BJ (cell line): ENCODE measurements at regions of chr17 and their contacts with region 1.

Region 1: GRCh38 chr17:12545877-12546513 is 119.7 kb upstream of the MYOCD start:
- DNase-seq: no peak
- H3K4me3 ChIP-seq: no peak overlapping the region
- H3K27me3 ChIP-seq: no peaks in the 10 kb centered on the region
- CTCF ChIP-seq: peak; percentile 85

Region 2: GRCh38 chr17:12256380-12256995 is 289.5 kb before region 1 on chr17:
- CTCF ChIA-PET with region 1: interaction called, 13 read pairs
- POLR2A ChIA-PET with region 1: no interaction called
- DNase-seq: peak; percentile 10
- H3K4me3 ChIP-seq: no peak overlapping the region
- H3K27me3 ChIP-seq: no peaks in the 10 kb centered on the region; the same call in 1 of the 2 replicates
- CTCF ChIP-seq: peak; percentile 69

Region 3: DNA sequence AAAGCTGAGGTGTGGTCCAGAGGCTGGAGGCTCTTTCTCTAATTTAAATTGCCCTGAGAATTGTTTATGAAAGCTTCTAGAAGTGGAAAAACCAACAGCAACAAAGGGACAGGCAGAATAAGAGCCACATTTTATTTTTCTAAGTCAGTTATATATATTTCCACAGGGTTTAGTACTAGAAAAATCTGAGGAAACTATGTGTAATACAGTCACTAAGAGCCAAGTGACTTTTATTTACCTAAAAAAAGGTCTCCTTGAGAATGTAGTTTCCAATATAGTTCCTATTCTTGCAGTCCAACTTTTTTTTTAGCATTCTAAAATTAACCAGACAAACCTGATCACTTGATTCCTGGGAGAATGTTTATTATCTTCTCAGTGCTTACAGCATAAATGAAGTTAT is 176.9 kb before region 1 on chr17:
- CTCF ChIA-PET with region 1: no interaction called
- POLR2A ChIA-PET with region 1: no interaction called
- DNase-seq: no peak
- H3K4me3 ChIP-seq: no peak overlapping the region
- H3K27me3 ChIP-seq: no peaks in the 10 kb centered on the region; the same call in 1 of the 2 replicates
- CTCF ChIP-seq: no peak

Region 4: DNA sequence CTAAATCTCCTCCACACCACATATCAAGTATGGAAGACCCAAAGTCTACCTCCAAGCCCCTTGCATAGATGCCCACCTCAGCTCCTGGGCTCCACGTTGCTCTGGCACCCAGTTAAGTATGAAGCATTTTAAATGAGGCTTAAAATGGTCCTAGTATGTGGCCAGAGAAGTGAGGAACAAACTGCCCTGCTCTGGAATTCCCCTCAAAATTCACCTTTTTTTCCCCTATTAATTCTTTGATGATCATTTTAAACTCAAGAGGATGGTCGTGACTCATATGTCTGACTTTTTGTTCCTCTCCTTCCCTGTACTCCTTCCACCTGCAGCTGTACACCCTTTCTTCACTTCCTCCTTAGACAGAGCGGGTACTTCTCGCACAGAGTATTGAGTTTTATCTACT is 114.8 kb before region 1 on chr17:
- CTCF ChIA-PET with region 1: no interaction called
- POLR2A ChIA-PET with region 1: no interaction called
- DNase-seq: no peak
- H3K4me3 ChIP-seq: no peak overlapping the region
- H3K27me3 ChIP-seq: no peaks in the 10 kb centered on the region; the same call in 1 of the 2 replicates
- CTCF ChIP-seq: no peak

Region 5: GRCh38 chr17:12485361-12485906 is 60.6 kb before region 1 on chr17:
- CTCF ChIA-PET with region 1: no interaction called
- POLR2A ChIA-PET with region 1: no interaction called
- DNase-seq: no peak
- H3K4me3 ChIP-seq: no peak overlapping the region
- H3K27me3 ChIP-seq: no peaks in the 10 kb centered on the region
- CTCF ChIP-seq: no peak

Region 6: DNA sequence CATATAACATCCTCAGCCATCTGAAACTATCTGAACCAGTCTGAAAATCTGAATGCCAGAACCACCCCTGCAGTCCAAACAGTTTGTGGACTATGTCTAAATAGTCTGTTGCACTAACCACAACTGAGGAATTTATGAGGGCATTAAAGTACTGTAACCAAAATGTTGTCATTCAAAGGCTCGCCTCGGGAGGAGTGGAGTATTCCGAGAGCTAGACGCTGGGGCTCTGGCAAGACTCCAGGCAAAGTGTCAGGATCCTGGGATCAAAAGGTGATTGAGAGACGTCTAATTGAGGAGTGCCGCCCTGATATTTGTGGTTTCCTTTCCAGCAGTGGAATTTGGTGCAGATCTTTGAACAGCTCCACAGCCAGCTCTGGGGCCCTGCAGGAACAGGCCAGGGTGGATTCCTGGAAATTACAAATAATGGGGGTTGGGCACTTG is 23.2 kb before region 1 on chr17:
- CTCF ChIA-PET with region 1: interaction called, 23 read pairs
- POLR2A ChIA-PET with region 1: no interaction called
- DNase-seq: peak; percentile 62
- H3K4me3 ChIP-seq: no peak overlapping the region
- H3K27me3 ChIP-seq: no peaks in the 10 kb centered on the region
- CTCF ChIP-seq: no peak